Kidney (tissue), 22 donors: ENCODE measurements at regions of chr20 and their contacts with region 1.

Region 1: GRCh38 chr20:17210983-17211382 is 15.9 kb upstream of the PCSK2 start:
- DNase-seq: no peak
- H3K4me3 ChIP-seq: no peak overlapping the region
- H3K27ac ChIP-seq: no peak overlapping the region
- H3K4me1 ChIP-seq: no peaks in the 10 kb centered on the region
- H3K27me3 ChIP-seq: no peaks in the 10 kb centered on the region
- CTCF ChIP-seq: no peak

Region 2: DNA sequence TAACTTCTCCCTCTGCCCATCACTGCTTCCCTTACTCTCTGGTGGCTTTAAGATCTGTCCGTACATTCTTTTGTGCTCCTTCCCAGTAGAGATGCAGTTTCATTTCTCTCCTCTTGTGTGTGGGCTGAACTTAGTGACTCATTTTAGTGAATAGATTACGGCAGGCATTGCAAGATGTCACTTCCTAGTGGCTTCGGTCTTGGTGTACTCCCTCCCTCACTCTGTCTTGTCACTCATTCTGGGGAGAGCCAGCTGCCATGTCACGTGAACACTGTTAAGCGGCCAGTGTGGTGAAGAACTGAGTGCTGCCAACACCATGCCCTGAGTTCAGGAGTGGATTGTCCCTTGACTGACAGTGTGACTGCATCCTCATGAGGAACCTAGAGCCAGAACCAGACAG is 346.9 kb before region 1 on chr20:
- intact Hi-C with region 1: loop called (anchors 5 kb)
- DNase-seq: no peak
- H3K4me3 ChIP-seq: no peak overlapping the region
- H3K27ac ChIP-seq: no peak overlapping the region
- H3K4me1 ChIP-seq: no peaks in the 10 kb centered on the region
- H3K27me3 ChIP-seq: no peaks in the 10 kb centered on the region
- CTCF ChIP-seq: no peak